Right ventricle myocardium inferior (tissue), 1 donor: ENCODE measurements at regions of chr18 and their contacts with region 1.

Region 1: GRCh38 chr18:31679133-31679731 is 5.1 kb downstream of the B4GALT6 start:
- DNase-seq: no peak
- ATAC-seq: no peak

Region 2: GRCh38 chr18:31596081-31596872 is 83.0 kb before region 1 on chr18:
- intact Hi-C with region 1: no loop called
- DNase-seq: no peak
- ATAC-seq: no peak

Region 3: GRCh38 chr18:31634331-31634713 is 44.9 kb before region 1 on chr18:
- intact Hi-C with region 1: loop called (anchors 5 kb)
- DNase-seq: no peak
- ATAC-seq: no peak